AG04449 (cell line): ENCODE measurements at regions of chr15 and their contacts with region 1.

Region 1: GRCh38 chr15:29050870-29051269 is 165.1 kb downstream of the APBA2 start:
- DNase-seq: peak; percentile 72
- H3K4me3 ChIP-seq: no peak overlapping the region
- CTCF ChIP-seq: no peak

Region 2: GRCh38 chr15:29090617-29091466 is 40.0 kb after region 1 on chr15:
- CTCF ChIA-PET with region 1: interaction called, 11 read pairs
- POLR2A ChIA-PET with region 1: no interaction called
- DNase-seq: no peak
- H3K4me3 ChIP-seq: no peak overlapping the region
- CTCF ChIP-seq: peak; percentile 81

Region 3: DNA sequence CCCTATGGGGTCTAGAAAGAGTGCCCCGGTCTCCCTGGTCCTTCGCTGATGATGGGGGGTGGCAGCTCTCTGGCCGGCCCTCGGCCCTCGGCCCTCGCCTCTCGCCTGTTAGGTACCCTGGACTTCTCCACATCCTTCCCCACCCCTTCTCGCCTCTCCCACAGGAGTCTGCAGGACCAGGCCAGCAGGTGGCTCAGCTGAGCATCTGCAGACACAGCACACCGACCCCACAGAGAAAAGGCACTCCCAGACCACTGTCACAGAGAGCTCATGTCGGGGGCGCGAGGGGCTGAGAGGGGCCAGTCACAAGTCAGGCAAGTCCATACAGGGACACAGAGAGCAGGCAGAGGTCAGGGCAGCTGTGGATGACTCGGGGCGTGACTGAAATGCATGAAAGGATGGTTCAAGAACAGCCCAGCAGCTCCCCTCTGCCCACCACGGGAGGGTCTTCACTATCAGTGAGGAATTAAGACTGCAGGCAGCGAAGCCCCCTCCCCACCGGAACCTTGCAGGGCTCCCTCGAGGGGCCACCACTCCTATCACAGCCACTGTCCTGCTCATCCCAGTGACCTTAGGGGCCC is 400.4 kb after region 1 on chr15:
- CTCF ChIA-PET with region 1: no interaction called
- POLR2A ChIA-PET with region 1: no interaction called
- DNase-seq: no peak
- H3K4me3 ChIP-seq: no peak overlapping the region
- CTCF ChIP-seq: peak; percentile 20